CD4-positive, alpha-beta T cell (primary cell): ENCODE measurements at regions of chr1 and their contacts with region 1.

Region 1: DNA sequence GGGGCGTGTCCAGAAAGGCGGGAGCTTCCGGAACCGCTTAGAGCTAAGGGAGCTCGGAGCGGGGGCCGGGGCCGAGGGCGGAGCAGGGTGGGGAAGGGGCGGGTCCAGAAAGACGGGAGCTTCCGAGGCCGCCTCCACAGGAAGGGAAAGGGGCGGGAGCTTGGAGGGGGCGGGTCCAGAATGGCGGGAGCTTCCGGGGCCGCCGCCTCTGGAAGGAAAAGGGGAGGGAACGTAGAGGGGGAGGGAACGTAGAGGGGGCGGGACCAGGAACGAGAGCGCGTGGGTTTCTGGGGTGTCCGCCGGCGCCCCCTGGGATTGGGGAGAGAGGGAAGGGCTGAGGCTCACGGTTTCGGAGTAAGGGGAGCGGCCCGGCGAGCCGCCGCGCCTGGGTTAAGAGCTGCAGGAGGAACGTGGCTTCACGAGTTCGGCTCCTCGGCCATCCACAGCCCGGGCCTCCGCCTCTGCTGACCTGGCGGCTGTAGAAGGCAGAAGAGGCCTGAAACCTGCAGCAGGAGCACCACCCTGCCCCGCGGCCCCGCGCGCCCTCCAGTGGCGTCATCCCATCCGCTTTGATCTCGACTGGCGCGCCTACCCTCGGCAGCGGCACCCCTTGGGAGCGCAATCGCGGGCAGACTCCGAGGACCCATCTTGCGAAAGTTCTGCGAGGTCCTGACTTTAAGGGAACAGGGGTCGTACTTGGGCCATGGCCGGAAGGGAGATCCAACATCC is 22.9 kb upstream of the HPDL start:
- DNase-seq: peak; percentile 96 to 100 (median 98)
- ATAC-seq: peak; percentile 85
- H3K4me3 ChIP-seq: peak overlapping the region; percentile 84
- H3K4me3 Mint-ChIP-seq: peak overlapping the region; percentile 95
- H3K27ac ChIP-seq: peak overlapping the region; percentile 67 to 95
- H3K27ac Mint-ChIP-seq: peak overlapping the region; percentile 95
- H3K4me1 ChIP-seq: peaks cover 24% of the 10 kb centered on the region
- H3K4me1 Mint-ChIP-seq: peaks cover 30% of the 10 kb centered on the region
- H3K27me3 ChIP-seq: no peaks in the 10 kb centered on the region
- H3K27me3 Mint-ChIP-seq: no peaks in the 10 kb centered on the region
- CTCF ChIP-seq: peak; percentile 84

Region 2: GRCh38 chr1:44631647-44632539 is 671.9 kb before region 1 on chr1:
- CTCF ChIA-PET with region 1: no interaction called
- POLR2A ChIA-PET with region 1: interaction called, 10 read pairs
- intact Hi-C with region 1: no loop called
- DNase-seq: peak; percentile 80 to 93 (median 86)
- ATAC-seq: peak; percentile 75
- H3K4me3 ChIP-seq: peak overlapping the region; percentile 71
- H3K4me3 Mint-ChIP-seq: peak overlapping the region; percentile 92
- H3K27ac ChIP-seq: peak overlapping the region; percentile 73 to 88
- H3K27ac Mint-ChIP-seq: peak overlapping the region; percentile 98
- H3K4me1 ChIP-seq: peaks cover 27% of the 10 kb centered on the region
- H3K4me1 Mint-ChIP-seq: peaks cover 48% of the 10 kb centered on the region
- H3K27me3 ChIP-seq: no peaks in the 10 kb centered on the region
- H3K27me3 Mint-ChIP-seq: no peaks in the 10 kb centered on the region
- CTCF ChIP-seq: no peak

Region 3: GRCh38 chr1:44730741-44731512 is 572.8 kb before region 1 on chr1 and contains the start of gene RNU5D-1:
- CTCF ChIA-PET with region 1: interaction called, 3 read pairs
- POLR2A ChIA-PET with region 1: interaction called, 5 read pairs
- intact Hi-C with region 1: loop called (anchors 5 kb)
- DNase-seq: peak; percentile 87 to 98 (median 94)
- ATAC-seq: peak; percentile 76
- H3K4me3 ChIP-seq: peak within 1 kb of the TSS; percentile 46
- H3K4me3 Mint-ChIP-seq: peak within 1 kb of the TSS; percentile 68
- H3K27ac ChIP-seq: peak within 1 kb of the TSS; percentile 93 to 96
- H3K27ac Mint-ChIP-seq: peak within 1 kb of the TSS; percentile 97
- H3K4me1 ChIP-seq: peaks cover 33% of the 10 kb centered on the region
- H3K4me1 Mint-ChIP-seq: peaks cover 35% of the 10 kb centered on the region
- H3K27me3 ChIP-seq: no peaks in the 10 kb centered on the region
- H3K27me3 Mint-ChIP-seq: no peaks in the 10 kb centered on the region
- CTCF ChIP-seq: peak; percentile 77
- total RNA-seq, gene RNU5D-1: not detected

Region 4: GRCh38 chr1:44830900-44831304 is 472.8 kb before region 1 on chr1:
- CTCF ChIA-PET with region 1: no interaction called
- POLR2A ChIA-PET with region 1: interaction called, 3 read pairs
- intact Hi-C with region 1: loop called (anchors 1 to 5 kb)
- DNase-seq: no peak
- ATAC-seq: no peak
- H3K4me3 ChIP-seq: no peak overlapping the region
- H3K4me3 Mint-ChIP-seq: no peak overlapping the region
- H3K27ac ChIP-seq: no peak overlapping the region
- H3K27ac Mint-ChIP-seq: no peak overlapping the region
- H3K4me1 ChIP-seq: peaks cover 8% of the 10 kb centered on the region
- H3K4me1 Mint-ChIP-seq: peaks cover 5% of the 10 kb centered on the region
- H3K27me3 ChIP-seq: no peaks in the 10 kb centered on the region
- H3K27me3 Mint-ChIP-seq: peaks cover 1% of the 10 kb centered on the region
- CTCF ChIP-seq: no peak

Region 5: GRCh38 chr1:45018599-45019230 is 285.0 kb before region 1 on chr1:
- CTCF ChIA-PET with region 1: interaction called, 66 read pairs
- POLR2A ChIA-PET with region 1: interaction called, 141 read pairs
- intact Hi-C with region 1: loop called (anchors 1 kb)
- DNase-seq: peak; percentile 32 to 79 (median 53)
- ATAC-seq: peak; percentile 82
- H3K4me3 ChIP-seq: no peak overlapping the region
- H3K4me3 Mint-ChIP-seq: no peak overlapping the region
- H3K27ac ChIP-seq: no peak overlapping the region
- H3K27ac Mint-ChIP-seq: no peak overlapping the region
- H3K4me1 ChIP-seq: peaks cover 17% of the 10 kb centered on the region
- H3K4me1 Mint-ChIP-seq: peaks cover 18% of the 10 kb centered on the region
- H3K27me3 ChIP-seq: no peaks in the 10 kb centered on the region
- H3K27me3 Mint-ChIP-seq: no peaks in the 10 kb centered on the region
- CTCF ChIP-seq: peak; percentile 68

Region 6: DNA sequence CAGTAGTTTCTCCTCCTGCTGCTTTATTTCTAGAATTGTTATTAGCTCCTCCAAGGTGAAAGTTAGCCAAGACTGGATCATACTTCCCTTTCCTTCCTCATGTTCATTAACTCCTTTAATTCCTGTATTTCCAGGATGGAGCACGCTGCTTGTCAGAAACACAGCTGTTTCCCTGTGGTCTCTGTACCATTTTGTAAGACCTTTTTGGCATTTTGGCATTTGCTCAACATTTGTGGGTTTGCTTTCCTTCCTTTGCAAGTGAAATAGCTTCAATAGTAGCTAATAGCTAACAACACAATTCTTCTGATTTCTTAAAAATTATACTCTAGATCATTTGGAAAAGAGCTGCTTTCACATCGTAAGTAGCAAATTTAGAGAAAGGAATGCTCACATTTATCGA is 21.4 kb before region 1 on chr1:
- CTCF ChIA-PET with region 1: no interaction called
- POLR2A ChIA-PET with region 1: no interaction called
- intact Hi-C with region 1: no loop called
- DNase-seq: no peak
- ATAC-seq: no peak
- H3K4me3 ChIP-seq: no peak overlapping the region
- H3K4me3 Mint-ChIP-seq: no peak overlapping the region
- H3K27ac ChIP-seq: no peak overlapping the region
- H3K27ac Mint-ChIP-seq: no peak overlapping the region
- H3K4me1 ChIP-seq: no peaks in the 10 kb centered on the region
- H3K4me1 Mint-ChIP-seq: no peaks in the 10 kb centered on the region
- H3K27me3 ChIP-seq: no peaks in the 10 kb centered on the region
- H3K27me3 Mint-ChIP-seq: no peaks in the 10 kb centered on the region
- CTCF ChIP-seq: no peak

Region 7: GRCh38 chr1:45499415-45499769 is 195.6 kb after region 1 on chr1:
- CTCF ChIA-PET with region 1: interaction called, 8 read pairs
- POLR2A ChIA-PET with region 1: interaction called, 32 read pairs
- intact Hi-C with region 1: no loop called
- DNase-seq: peak in 1 of 14 experiments; percentile 23
- ATAC-seq: no peak
- H3K4me3 ChIP-seq: peak overlapping the region; percentile 80
- H3K4me3 Mint-ChIP-seq: peak overlapping the region; percentile 96
- H3K27ac ChIP-seq: peak overlapping the region; percentile 0 to 53
- H3K27ac Mint-ChIP-seq: peak overlapping the region; percentile 83
- H3K4me1 ChIP-seq: peaks cover 24% of the 10 kb centered on the region
- H3K4me1 Mint-ChIP-seq: peaks cover 36% of the 10 kb centered on the region
- H3K27me3 ChIP-seq: no peaks in the 10 kb centered on the region
- H3K27me3 Mint-ChIP-seq: no peaks in the 10 kb centered on the region
- CTCF ChIP-seq: no peak